ENCODE measurements at regions of chr7 and their contacts with region 1.

Region 1: DNA sequence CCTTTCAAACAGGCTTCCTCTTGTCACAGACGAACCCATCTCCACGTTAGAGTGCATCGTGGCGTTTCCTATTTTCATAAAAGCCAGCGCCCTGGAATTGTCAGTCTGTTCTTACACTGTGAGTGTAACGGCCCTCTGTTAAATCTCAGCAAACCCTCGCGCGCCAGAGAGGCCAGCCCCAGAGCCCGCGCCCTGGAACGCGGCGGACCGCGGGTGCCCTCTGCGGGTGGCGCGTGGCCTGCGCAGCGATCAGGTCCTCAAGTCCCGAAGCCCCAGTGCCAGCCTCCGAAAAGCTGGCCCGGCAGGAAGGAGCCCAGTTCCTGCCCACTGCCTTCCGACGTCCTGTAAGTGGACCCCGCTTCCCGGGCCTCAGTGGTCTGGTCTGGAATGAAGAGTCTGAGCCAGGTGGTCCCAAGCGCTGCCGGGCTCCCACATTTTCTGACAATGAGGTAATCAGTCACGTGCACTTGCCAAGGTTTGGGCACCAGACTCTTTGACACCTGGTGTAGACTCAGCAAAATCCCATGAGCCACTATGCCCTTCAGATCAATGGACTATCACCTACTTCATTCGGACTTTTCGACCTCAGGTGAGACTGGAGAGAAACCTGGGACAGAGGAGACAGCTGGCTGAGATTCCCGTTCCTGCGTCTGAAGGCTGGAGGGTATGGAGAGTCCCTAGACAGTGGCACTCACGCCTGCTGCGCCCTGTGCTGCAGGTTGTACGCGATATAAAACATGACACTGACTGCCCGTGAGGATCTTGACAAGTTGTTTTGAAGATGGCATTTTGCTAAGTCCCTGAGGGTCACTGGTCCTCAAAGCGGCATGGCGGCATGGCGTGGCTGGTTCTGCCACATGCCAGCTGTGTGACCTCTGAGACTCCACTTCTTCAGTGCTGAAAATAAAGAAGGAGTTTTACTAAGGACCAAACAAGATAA is 109.4 kb upstream of the LANCL2 start:
- DNase-seq: peak; percentile 84
- H3K4me3 Mint-ChIP-seq: peak overlapping the region; percentile 70
- H3K27ac Mint-ChIP-seq: no peak overlapping the region
- H3K4me1 Mint-ChIP-seq: peaks cover 7% of the 10 kb centered on the region
- H3K27me3 Mint-ChIP-seq: peaks cover 54% of the 10 kb centered on the region

Region 2: GRCh38 chr7:54758702-54759592 is 496.8 kb before region 1 on chr7 and contains the start of gene SEC61G:
- CTCF ChIA-PET with region 1: interaction called, 17 read pairs
- intact Hi-C with region 1: loop called (anchors 1 kb)
- DNase-seq: peak; percentile 97
- H3K4me3 Mint-ChIP-seq: peak within 1 kb of the TSS; percentile 100
- H3K27ac Mint-ChIP-seq: peak within 1 kb of the TSS; percentile 92
- H3K4me1 Mint-ChIP-seq: peaks cover 18% of the 10 kb centered on the region
- H3K27me3 Mint-ChIP-seq: peaks cover 2% of the 10 kb centered on the region
- total RNA-seq, gene SEC61G: 121 to 126 TPM

Region 3: DNA sequence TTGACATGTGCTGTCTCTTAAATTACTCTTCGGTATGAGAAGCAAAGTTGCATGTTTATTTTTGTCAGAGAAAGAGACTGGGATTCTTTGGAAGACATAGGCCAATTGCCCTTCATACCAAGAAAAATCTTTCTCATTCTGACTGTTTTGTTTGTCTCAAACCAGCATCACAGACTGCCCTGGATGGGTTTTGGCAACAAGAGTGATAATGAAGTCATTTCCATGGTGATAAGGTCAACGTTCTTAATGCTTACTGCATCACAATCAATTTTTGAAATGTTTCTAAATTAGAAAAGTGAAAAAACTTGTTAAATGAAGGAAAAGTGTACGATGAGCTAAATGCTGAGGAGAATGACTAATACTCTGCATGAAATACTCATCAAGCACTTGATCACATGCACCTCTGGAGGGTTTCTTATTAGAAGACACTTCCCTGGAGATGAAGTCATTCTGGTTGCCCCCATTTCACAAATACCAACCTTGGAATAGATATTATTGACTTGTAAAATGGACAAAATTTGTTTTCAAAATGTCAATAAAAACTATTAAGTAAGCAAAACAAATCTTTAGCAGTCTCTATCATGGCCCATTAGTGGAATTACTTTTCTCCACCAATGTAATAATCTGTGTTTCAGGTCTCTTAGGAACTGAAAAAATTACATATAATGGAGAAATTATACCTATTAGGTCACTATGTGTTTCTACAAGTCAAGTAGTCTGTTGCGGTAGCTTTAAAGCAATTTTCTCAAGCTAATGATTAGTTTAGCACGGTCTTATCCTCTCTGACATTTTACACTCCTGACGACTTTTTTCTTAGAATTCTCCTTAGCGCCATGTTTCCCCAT is 476.8 kb before region 1 on chr7:
- CTCF ChIA-PET with region 1: interaction called, 59 read pairs
- intact Hi-C with region 1: loop called (anchors 1 kb)
- DNase-seq: no peak
- H3K4me3 Mint-ChIP-seq: no peak overlapping the region
- H3K27ac Mint-ChIP-seq: no peak overlapping the region
- H3K4me1 Mint-ChIP-seq: peaks cover 3% of the 10 kb centered on the region
- H3K27me3 Mint-ChIP-seq: peaks cover 4% of the 10 kb centered on the region

Region 4: GRCh38 chr7:54877683-54878082 is 378.1 kb before region 1 on chr7:
- CTCF ChIA-PET with region 1: interaction called, 3 read pairs
- intact Hi-C with region 1: loop called (anchors 10 kb)
- DNase-seq: no peak
- H3K4me3 Mint-ChIP-seq: no peak overlapping the region
- H3K27ac Mint-ChIP-seq: no peak overlapping the region
- H3K4me1 Mint-ChIP-seq: no peaks in the 10 kb centered on the region
- H3K27me3 Mint-ChIP-seq: peaks cover 9% of the 10 kb centered on the region

Region 5: GRCh38 chr7:54972733-54973294 is 283.0 kb before region 1 on chr7:
- CTCF ChIA-PET with region 1: no interaction called
- intact Hi-C with region 1: no loop called
- DNase-seq: no peak
- H3K4me3 Mint-ChIP-seq: no peak overlapping the region
- H3K27ac Mint-ChIP-seq: no peak overlapping the region
- H3K4me1 Mint-ChIP-seq: no peaks in the 10 kb centered on the region
- H3K27me3 Mint-ChIP-seq: peaks cover 4% of the 10 kb centered on the region

Region 6: DNA sequence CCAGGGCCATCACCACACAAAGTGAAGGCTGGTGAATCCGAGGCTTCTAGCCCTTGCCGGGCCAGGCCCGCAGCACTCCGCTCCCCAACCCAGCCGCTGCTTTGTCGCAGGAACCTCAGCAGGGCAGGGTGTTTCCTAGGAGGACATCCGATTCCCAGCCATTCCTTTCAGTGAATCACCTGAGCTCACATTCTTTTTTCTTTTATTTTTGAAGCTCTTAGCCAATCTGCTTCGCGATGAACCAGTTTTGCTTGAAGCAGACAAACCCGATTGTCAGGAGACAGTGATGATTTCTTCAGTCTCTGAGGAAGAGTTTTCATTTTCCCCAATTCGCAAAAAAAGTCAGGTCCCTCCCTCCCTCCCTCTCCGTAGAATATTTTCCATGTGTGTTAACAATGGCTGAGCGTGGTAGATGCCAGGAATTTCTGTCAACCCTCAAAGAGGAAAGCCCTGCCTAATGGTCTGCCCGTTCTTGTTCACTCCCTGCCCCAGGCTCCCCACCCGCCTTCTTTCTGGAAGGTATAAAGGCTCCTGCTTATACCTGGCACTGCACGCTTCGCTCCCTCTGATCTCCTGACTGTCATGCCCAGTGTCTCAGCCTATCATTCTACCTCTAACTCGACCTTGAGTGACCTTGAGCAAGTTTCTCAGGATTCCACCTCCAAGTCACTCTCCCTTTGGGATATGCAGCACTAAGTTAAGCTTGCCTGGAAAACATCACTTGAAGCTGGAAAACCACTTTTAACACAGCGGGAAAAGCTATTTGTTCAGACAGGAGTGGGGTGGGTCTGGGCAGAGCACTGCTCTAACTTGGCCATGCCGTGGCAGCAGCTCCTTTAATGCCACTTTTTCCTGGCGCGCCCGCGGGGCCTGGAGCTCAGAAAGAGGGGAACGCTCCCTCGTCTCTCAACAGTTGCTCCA is 201.9 kb before region 1 on chr7:
- CTCF ChIA-PET with region 1: interaction called, 3 read pairs
- intact Hi-C with region 1: loop called (anchors 10 kb)
- DNase-seq: no peak
- H3K4me3 Mint-ChIP-seq: no peak overlapping the region
- H3K27ac Mint-ChIP-seq: no peak overlapping the region
- H3K4me1 Mint-ChIP-seq: no peaks in the 10 kb centered on the region
- H3K27me3 Mint-ChIP-seq: peaks cover 5% of the 10 kb centered on the region

Region 7: GRCh38 chr7:55185941-55186609 is 69.7 kb before region 1 on chr7:
- CTCF ChIA-PET with region 1: no interaction called
- intact Hi-C with region 1: no loop called
- DNase-seq: no peak
- H3K4me3 Mint-ChIP-seq: no peak overlapping the region
- H3K27ac Mint-ChIP-seq: no peak overlapping the region
- H3K4me1 Mint-ChIP-seq: no peaks in the 10 kb centered on the region
- H3K27me3 Mint-ChIP-seq: peaks cover 8% of the 10 kb centered on the region

Region 8: DNA sequence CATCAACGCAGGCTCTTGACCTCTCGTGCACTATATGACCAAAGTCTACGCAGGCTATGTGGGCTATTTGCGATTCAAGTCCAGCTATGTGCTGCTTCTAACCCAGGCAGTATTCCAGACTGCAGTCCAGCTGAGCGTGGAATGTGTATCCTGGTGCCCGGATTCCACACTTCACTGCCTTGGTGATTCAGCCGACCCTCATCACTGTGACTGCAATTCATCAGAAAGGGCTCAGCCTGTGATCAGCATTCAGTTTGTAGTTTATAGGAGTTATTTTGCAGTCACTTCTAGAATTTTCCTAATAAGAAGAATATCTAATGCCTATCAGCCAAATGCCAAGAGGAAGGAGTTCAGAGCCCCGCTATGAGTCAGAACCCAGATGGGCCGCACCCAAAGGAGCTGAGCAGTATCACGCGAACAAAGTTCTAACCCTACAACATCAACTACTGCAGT is 10.5 kb before region 1 on chr7:
- CTCF ChIA-PET with region 1: interaction called, 11 read pairs
- intact Hi-C with region 1: no loop called
- DNase-seq: no peak
- H3K4me3 Mint-ChIP-seq: no peak overlapping the region
- H3K27ac Mint-ChIP-seq: no peak overlapping the region
- H3K4me1 Mint-ChIP-seq: no peaks in the 10 kb centered on the region
- H3K27me3 Mint-ChIP-seq: peaks cover 8% of the 10 kb centered on the region

Region 9: GRCh38 chr7:55365675-55366460 is 110.1 kb after region 1 on chr7:
- CTCF ChIA-PET with region 1: no interaction called
- intact Hi-C with region 1: no loop called
- DNase-seq: peak; percentile 93
- H3K4me3 Mint-ChIP-seq: peak overlapping the region; percentile 92
- H3K27ac Mint-ChIP-seq: peak overlapping the region; percentile 96
- H3K4me1 Mint-ChIP-seq: peaks cover 8% of the 10 kb centered on the region
- H3K27me3 Mint-ChIP-seq: no peaks in the 10 kb centered on the region

Measured in activated naive CD4-positive, alpha-beta T cell treated with anti-CD3 and anti-CD28 coated beads for 36 hours (primary cell).